ENCODE measurements at regions of chr2 and their contacts with region 1.

Region 1: DNA sequence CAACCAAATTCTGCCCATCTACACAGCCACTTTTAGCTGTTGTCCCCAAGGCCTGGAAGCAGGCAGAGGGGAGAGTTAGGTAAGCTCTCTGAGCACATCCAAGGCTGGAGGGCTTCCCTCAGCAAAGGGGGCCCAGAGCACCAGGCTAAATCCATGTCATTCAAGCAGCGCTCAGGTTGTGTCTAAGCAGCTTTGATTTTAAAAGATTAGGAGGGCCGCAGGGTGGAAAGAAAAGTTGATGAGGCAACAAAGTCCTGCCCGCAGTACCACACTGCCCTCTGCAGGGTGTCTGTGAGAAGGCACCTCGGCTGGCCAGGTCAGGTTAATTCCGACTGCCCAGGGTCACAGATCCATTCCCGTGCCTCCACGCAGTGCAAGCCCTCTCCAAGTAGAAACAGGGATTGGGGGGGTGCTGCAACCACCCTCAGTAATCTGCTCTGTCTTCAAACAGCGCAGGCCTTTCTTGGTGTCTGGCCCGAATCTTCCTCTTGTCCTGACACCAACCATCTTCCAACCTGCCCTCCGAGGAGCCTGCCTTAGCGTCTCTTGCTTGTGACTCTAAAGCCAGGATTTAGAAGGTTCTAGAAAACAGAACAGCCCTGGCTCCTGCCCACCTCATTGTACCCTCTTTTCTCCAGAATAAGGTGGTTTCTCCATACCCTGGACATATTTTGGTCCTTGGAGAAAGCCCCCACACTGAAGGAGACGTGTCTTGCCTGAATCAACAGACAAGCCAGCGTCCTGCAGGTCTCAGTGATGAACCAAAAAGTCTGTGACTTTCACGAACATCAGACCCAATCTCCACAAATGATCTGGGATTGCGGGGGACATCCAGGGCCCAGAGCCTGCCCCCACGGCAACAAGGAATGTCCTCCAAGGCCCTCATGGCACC is 289.2 kb downstream of the TNS1 start:
- DNase-seq: peak; percentile 59
- H3K4me3 ChIP-seq: no peak overlapping the region
- H3K27ac ChIP-seq: no peak overlapping the region
- H3K4me1 ChIP-seq: peaks cover 26% of the 10 kb centered on the region
- H3K27me3 ChIP-seq: no peaks in the 10 kb centered on the region
- CTCF ChIP-seq: peak; percentile 95 to 98

Region 2: DNA sequence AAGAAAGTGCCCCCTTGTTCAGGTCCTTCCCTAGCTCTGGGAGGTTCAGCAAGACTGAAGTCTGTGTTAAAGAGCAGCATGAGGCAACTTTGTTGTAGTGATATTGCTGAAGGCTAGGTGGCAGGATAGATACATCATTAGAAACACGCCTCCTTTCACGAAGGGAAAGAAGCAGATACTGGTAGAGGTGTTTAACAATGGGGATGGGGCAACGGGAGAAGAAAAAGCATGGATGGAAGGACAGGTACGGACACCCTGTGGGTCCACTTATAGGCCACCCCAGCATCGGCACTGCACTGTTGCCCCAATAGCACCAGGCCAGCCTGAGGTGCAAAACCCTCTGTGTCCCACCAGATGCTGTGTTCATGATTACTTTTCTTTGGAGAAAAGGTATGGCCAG is 1014.7 kb before region 1 on chr2:
- CTCF ChIA-PET with region 1: no interaction called
- dilution Hi-C with region 1: loop called (anchors 25 kb)
- in situ Hi-C with region 1: loop called (anchors 25 kb)
- intact Hi-C with region 1: loop called (anchors 2 kb)
- DNase-seq: peak; percentile 49
- H3K4me3 ChIP-seq: no peak overlapping the region
- H3K27ac ChIP-seq: no peak overlapping the region
- H3K4me1 ChIP-seq: peaks cover 14% of the 10 kb centered on the region
- H3K27me3 ChIP-seq: peaks cover 4% of the 10 kb centered on the region
- CTCF ChIP-seq: peak; percentile 77 to 83

Region 3: GRCh38 chr2:216871333-216871934 is 842.2 kb before region 1 on chr2:
- CTCF ChIA-PET with region 1: no interaction called
- dilution Hi-C with region 1: no loop called
- in situ Hi-C with region 1: no loop called
- intact Hi-C with region 1: no loop called
- DNase-seq: no peak
- H3K4me3 ChIP-seq: no peak overlapping the region
- H3K27ac ChIP-seq: no peak overlapping the region
- H3K4me1 ChIP-seq: peaks cover 7% of the 10 kb centered on the region
- H3K27me3 ChIP-seq: no peaks in the 10 kb centered on the region
- CTCF ChIP-seq: no peak

Region 4: DNA sequence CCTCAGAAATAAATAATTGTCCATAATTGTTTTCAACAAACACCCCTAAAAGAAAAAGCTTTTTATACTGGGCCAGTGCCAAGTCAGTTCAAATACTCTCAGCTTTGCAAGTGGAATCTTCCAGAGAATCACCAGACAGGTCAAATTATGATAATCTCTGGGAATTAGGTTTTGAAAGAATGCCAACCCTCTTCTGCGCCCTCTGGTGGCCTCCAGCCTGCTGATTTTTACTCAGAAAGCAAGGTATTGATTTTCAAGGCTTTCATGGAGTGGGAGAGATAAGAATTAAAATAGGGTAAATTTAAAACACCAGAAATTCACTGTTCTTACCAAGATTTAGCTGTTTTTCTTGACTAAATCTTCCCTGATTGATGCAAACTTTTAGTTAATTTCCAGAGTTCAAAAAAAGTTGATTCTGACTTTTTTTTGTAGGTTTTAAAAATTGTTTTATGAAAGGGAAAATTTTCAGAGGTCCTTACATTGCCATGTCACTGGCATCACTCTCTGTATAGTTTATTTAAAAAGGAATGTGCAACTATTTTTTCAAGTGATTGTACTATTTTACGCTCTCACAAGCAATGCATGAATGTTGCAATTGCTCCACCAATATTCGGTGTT is 570.9 kb before region 1 on chr2:
- CTCF ChIA-PET with region 1: no interaction called
- dilution Hi-C with region 1: no loop called
- in situ Hi-C with region 1: no loop called
- intact Hi-C with region 1: loop called (anchors 5 kb)
- DNase-seq: peak; percentile 17
- H3K4me3 ChIP-seq: no peak overlapping the region
- H3K27ac ChIP-seq: no peak overlapping the region
- H3K4me1 ChIP-seq: no peaks in the 10 kb centered on the region
- H3K27me3 ChIP-seq: no peaks in the 10 kb centered on the region
- CTCF ChIP-seq: peak; percentile 78 to 81

Region 5: GRCh38 chr2:217331523-217332139 is 382.0 kb before region 1 on chr2:
- CTCF ChIA-PET with region 1: no interaction called
- dilution Hi-C with region 1: no loop called
- in situ Hi-C with region 1: loop called in 1 of 2 experiments (anchors 25 kb)
- intact Hi-C with region 1: no loop called
- DNase-seq: peak; percentile 69
- H3K4me3 ChIP-seq: no peak overlapping the region
- H3K27ac ChIP-seq: peak overlapping the region; percentile 12
- H3K4me1 ChIP-seq: peaks cover 33% of the 10 kb centered on the region
- H3K27me3 ChIP-seq: no peaks in the 10 kb centered on the region
- CTCF ChIP-seq: no peak

Region 6: GRCh38 chr2:217650716-217651360 is 62.8 kb before region 1 on chr2:
- CTCF ChIA-PET with region 1: interaction called, 7 read pairs
- dilution Hi-C with region 1: no loop called
- in situ Hi-C with region 1: no loop called
- intact Hi-C with region 1: loop called (anchors 1 kb)
- DNase-seq: peak; percentile 63
- H3K4me3 ChIP-seq: no peak overlapping the region
- H3K27ac ChIP-seq: no peak overlapping the region
- H3K4me1 ChIP-seq: peaks cover 12% of the 10 kb centered on the region
- H3K27me3 ChIP-seq: no peaks in the 10 kb centered on the region
- CTCF ChIP-seq: peak; percentile 92

Region 7: GRCh38 chr2:217836901-217837491 is 123.4 kb after region 1 on chr2:
- CTCF ChIA-PET with region 1: no interaction called
- dilution Hi-C with region 1: no loop called
- in situ Hi-C with region 1: no loop called
- intact Hi-C with region 1: no loop called
- DNase-seq: no peak
- H3K4me3 ChIP-seq: no peak overlapping the region
- H3K27ac ChIP-seq: no peak overlapping the region
- H3K4me1 ChIP-seq: no peaks in the 10 kb centered on the region
- H3K27me3 ChIP-seq: peaks cover 6% of the 10 kb centered on the region
- CTCF ChIP-seq: peak; percentile 6 to 30

Region 8: DNA sequence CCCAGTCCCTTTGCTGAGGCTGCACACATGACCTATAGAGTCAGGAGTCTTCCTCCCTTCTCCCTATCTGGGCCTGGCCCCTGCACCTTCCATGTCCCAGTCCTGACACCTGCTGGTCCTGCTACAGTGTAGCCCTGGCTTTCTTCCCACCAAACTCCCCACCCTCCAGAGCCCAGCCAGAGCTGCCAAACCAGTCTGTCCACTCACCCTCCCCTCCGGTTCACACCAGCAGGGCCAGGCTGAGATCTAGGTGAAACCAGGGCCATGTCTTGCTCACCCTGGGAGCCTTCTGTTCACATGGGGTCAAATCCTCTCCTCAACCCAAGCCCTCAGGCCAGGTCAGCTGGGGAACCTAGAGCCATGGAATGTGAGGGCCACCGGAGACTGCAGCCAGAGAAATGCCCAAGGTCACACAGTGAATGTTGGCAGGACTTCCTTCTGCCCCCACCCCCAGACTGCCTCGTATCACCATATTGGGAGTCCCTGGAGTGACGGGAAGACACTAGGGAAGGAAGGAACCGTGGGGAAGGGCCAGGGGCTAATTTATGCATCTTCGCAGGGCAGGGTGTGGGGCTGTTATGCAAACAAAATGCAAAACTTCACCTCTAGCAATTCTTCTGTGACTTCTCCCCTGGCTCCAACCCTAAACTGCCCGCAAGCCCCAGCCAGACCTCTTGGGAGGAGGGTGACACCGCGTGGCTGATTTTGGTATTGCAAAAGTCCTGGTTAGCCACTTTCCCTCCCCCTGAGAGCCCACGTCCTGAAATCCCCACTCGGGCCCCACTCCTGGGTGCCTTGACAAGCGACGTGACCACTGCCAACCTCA is 274.6 kb after region 1 on chr2:
- CTCF ChIA-PET with region 1: no interaction called
- dilution Hi-C with region 1: no loop called
- in situ Hi-C with region 1: no loop called
- intact Hi-C with region 1: no loop called
- DNase-seq: peak; percentile 68
- H3K4me3 ChIP-seq: no peak overlapping the region
- H3K27ac ChIP-seq: no peak overlapping the region
- H3K4me1 ChIP-seq: peaks cover 5% of the 10 kb centered on the region
- H3K27me3 ChIP-seq: no peaks in the 10 kb centered on the region
- CTCF ChIP-seq: peak; percentile 71 to 84